Heart left ventricle (tissue), 16 donors: ENCODE measurements at regions of chr1 and their contacts with region 1.

Region 1: GRCh38 chr1:40612345-40612831 is 53.1 kb downstream of the RIMS3 start:
- DNase-seq: peak in 4 of 5 donors; percentile 50 to 68 (median 56)
- ATAC-seq: peak; percentile 47 to 92 (median 88)
- H3K4me3 ChIP-seq: no peak overlapping the region
- H3K27ac ChIP-seq: no peak overlapping the region
- H3K4me1 ChIP-seq: peaks cover 0 to 3% (median 0%) of the 10 kb centered on the region in 12 donors
- H3K27me3 ChIP-seq: no peaks in the 10 kb centered on the region
- CTCF ChIP-seq: peak; percentile 72 to 90 (median 80)
- POLR2A ChIP-seq: no peak

Region 2: GRCh38 chr1:40563266-40563665 is 49.1 kb before region 1 on chr1:
- intact Hi-C with region 1: no loop called
- DNase-seq: no peak
- ATAC-seq: no peak
- H3K4me3 ChIP-seq: no peak overlapping the region
- H3K27ac ChIP-seq: no peak overlapping the region
- H3K4me1 ChIP-seq: no peaks in the 10 kb centered on the region
- H3K27me3 ChIP-seq: no peaks in the 10 kb centered on the region
- CTCF ChIP-seq: no peak
- POLR2A ChIP-seq: no peak

Region 3: DNA sequence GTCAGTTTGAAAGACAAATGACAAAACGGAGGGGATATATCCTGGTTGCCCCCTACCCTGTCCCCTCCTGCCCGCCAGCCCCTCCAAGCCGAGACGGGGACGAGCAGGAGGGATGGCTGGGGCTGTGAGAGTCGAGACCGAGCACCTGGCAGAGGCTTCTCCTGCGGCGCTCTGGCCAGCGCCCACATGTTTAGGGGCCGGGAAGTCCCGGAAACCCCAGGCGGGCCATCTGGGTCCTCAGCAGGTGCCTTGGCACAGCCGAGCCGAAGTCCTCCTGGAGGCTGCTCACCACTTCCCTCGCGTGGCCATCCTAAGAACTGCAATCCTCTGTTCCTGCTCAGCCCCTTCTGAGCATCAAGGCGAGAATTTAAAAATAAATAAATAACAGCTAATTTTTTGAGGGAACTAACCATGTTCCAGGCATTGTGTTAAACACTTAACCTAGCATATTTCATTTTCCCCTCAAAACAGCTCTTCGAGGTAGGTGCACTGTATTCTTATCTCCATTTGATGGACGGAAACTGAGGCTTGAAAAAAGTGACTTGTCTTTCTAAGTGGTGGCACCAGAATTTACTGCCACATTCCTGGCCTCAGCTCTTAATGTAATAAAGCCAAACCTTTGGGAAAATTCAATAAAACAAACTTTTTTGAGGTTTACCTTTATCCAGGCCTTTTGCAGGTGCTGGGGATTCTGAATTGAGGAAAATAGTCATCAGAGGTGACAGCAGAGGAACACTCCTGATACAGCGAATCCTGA is 56.6 kb after region 1 on chr1:
- intact Hi-C with region 1: loop called in 7 of 10 experiments (anchors 1 to 10 kb)
- DNase-seq: peak; percentile 67 to 87 (median 78)
- ATAC-seq: peak in 3 of 4 donors; percentile 64 to 70 (median 70)
- H3K4me3 ChIP-seq: peak overlapping the region in 2 of 12 donors; percentile 2 to 21
- H3K27ac ChIP-seq: no peak overlapping the region
- H3K4me1 ChIP-seq: peaks cover 0 to 18% (median 7%) of the 10 kb centered on the region in 12 donors
- H3K27me3 ChIP-seq: no peaks in the 10 kb centered on the region
- CTCF ChIP-seq: peak; percentile 92 to 98 (median 94)
- POLR2A ChIP-seq: no peak

Region 4: DNA sequence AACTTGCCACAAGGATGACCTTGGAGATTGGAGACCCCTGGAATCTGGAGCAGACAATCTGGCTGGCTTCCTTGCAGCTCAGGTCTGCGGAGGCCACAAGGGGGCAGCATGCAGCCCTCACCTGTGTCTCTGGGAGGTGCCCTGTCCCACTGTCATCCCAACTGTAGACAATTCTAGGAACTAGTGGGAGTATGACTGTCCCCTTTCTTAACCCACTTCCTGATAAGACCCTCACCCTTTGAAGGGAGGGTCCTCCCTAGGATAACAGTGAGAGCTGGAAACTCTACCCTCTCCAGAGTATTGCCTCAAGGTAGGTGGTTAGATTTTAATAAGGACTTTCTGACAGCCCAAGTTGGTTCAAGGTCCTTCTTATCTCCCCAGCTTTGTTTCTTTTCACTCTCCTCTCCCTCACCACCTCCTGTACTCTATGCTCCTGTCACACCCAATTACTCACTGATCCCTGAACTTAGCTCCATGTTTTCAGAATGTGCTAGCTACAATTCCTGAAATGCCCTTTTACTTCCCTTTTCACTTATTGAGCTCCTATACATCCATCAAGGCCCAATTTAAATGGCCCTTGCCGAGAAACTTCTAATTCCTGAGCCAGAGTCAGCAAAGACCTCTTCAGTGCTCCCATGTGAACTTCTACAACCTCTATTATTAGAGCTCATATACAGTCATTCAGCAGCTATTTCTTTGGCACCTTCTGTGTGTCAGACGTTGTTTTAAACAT is 162.0 kb after region 1 on chr1:
- intact Hi-C with region 1: loop called in 3 of 10 experiments (anchors 5 to 10 kb)
- DNase-seq: peak in 2 of 5 donors; percentile 38 to 53
- ATAC-seq: peak in 3 of 4 donors; percentile 36 to 68 (median 56)
- H3K4me3 ChIP-seq: no peak overlapping the region
- H3K27ac ChIP-seq: peak overlapping the region in 1 of 12 donors; percentile 9
- H3K4me1 ChIP-seq: peaks cover 0 to 15% (median 5%) of the 10 kb centered on the region in 12 donors
- H3K27me3 ChIP-seq: no peaks in the 10 kb centered on the region
- CTCF ChIP-seq: peak; percentile 64 to 86 (median 76)
- POLR2A ChIP-seq: no peak

Region 5: GRCh38 chr1:40825435-40825788 is 213.0 kb after region 1 on chr1:
- intact Hi-C with region 1: no loop called
- DNase-seq: no peak
- ATAC-seq: peak in 3 of 4 donors; percentile 23 to 78 (median 38)
- H3K4me3 ChIP-seq: no peak overlapping the region
- H3K27ac ChIP-seq: peak overlapping the region in 4 of 12 donors; percentile 21 to 44 (median 31)
- H3K4me1 ChIP-seq: peaks cover 0 to 11% (median 0%) of the 10 kb centered on the region in 12 donors
- H3K27me3 ChIP-seq: no peaks in the 10 kb centered on the region
- CTCF ChIP-seq: no peak
- POLR2A ChIP-seq: no peak

Region 6: DNA sequence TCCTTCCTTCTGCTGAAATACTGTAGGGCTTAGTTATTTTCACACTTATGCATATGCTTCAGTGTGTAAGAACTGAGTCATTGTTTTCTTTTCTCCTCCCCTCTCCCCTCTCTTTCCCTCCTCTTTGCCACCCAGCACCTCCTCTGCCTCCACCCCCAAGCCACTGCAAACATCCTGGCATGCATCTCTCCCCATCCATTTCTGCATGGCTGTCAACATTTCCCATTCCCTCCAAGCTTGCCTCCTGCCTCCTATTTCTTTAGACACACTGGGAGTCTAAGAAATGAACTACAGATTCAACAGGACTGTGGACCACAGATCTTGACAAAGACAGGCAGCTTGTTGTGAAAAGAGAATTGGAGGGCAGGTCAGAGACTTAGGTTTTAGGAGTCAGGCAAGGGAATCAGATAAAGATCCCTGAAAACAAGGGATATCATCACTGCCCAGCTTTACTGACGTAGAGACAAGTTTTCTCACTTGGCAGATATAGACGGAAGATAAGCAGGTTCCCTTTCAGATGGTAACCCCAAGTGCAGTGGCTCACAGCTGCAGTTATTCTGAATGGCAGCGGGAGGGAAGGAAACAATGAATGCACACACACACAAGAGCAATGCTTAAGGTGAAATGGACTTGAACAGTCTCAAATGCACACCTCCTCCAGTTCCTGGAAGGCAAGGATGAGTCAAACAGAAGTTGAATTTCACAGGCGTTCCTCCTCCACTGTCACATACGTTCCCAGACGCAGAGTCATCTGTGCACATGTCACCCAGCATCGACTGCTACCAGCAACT is 1250.2 kb after region 1 on chr1:
- intact Hi-C with region 1: no loop called
- DNase-seq: no peak
- ATAC-seq: no peak
- H3K4me3 ChIP-seq: no peak overlapping the region
- H3K27ac ChIP-seq: no peak overlapping the region
- H3K4me1 ChIP-seq: peaks cover 0 to 17% (median 9%) of the 10 kb centered on the region in 12 donors
- H3K27me3 ChIP-seq: no peaks in the 10 kb centered on the region
- CTCF ChIP-seq: no peak
- POLR2A ChIP-seq: no peak